ENCODE measurements at regions of chr11 and their contacts with region 1.

Region 1: GRCh38 chr11:64040684-64041322 is 5.1 kb downstream of the FLRT1 start:
- DNase-seq: peak; percentile 27
- ATAC-seq: peak; percentile 49
- H3K4me3 ChIP-seq: no peak overlapping the region
- H3K27ac ChIP-seq: no peak overlapping the region
- H3K4me1 ChIP-seq: peaks cover 26% of the 10 kb centered on the region
- H3K27me3 ChIP-seq: peaks cover 2 to 21% of the 10 kb centered on the region in 2 experiments; a peak in 3 of 5 replicates
- CTCF ChIP-seq: peak; percentile 79
- EP300 ChIP-seq: no peak
- POLR2A ChIP-seq: no peak
- RAD21 ChIP-seq: peak; percentile 87

Region 2: GRCh38 chr11:63888170-63889086 is 152.4 kb before region 1 on chr11:
- CTCF ChIA-PET with region 1: no interaction called
- POLR2A ChIA-PET with region 1: no interaction called
- in situ Hi-C with region 1: no loop called
- intact Hi-C with region 1: no loop called
- DNase-seq: peak; percentile 81
- ATAC-seq: peak; percentile 93
- H3K4me3 ChIP-seq: peak overlapping the region; percentile 46 to 79 (median 53)
- H3K27ac ChIP-seq: peak overlapping the region; percentile 92
- H3K4me1 ChIP-seq: peaks cover 41% of the 10 kb centered on the region
- H3K27me3 ChIP-seq: no peaks in the 10 kb centered on the region
- CTCF ChIP-seq: peak; percentile 26
- EP300 ChIP-seq: no peak
- POLR2A ChIP-seq: peak; percentile 71 to 87
- RAD21 ChIP-seq: peak; percentile 60; the same call in 1 of the 2 replicates

Region 3: DNA sequence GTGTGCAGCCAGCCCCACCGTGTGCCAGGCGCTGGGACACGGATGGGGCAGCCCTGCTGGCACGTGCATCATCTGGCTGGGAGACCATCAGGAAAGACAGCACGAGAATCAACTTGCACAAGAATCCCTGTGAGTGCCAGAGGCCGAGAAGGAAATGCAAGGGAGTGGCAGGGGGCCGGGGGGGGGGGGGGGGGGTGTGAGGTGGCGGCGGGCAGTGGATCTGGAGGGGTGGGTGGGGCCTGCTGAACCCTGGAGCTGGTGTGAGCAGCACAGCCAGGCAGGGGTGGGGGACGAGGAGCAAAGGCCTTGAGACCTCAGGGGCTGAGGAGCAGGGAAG is 19.1 kb before region 1 on chr11:
- CTCF ChIA-PET with region 1: no interaction called
- POLR2A ChIA-PET with region 1: no interaction called
- in situ Hi-C with region 1: no loop called
- intact Hi-C with region 1: no loop called
- DNase-seq: no peak
- ATAC-seq: no peak
- H3K4me3 ChIP-seq: no peak overlapping the region
- H3K27ac ChIP-seq: no peak overlapping the region
- H3K4me1 ChIP-seq: peaks cover 15% of the 10 kb centered on the region
- H3K27me3 ChIP-seq: no peaks in the 10 kb centered on the region
- CTCF ChIP-seq: no peak
- EP300 ChIP-seq: no peak
- POLR2A ChIP-seq: no peak
- RAD21 ChIP-seq: no peak

Region 4: DNA sequence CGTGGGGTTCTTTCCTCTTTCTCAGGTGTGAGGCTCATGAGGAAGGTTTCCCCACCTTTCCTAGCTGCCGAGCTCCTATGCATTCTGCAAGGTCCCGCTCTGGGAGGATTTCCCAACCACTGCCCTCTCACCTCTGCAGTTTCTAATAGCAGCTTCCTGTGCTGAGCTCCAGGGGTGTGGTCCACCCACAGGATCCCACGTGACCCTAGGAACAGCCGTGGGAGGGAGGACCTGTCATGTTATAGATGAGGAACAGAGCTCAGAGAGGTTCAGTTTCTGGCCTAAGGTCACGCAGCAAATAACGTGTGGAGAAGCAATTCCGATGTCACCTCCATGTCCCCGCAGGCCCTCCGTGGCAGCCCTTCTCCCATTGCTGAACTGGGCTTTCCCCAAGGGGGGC is 33.4 kb after region 1 on chr11:
- CTCF ChIA-PET with region 1: no interaction called
- POLR2A ChIA-PET with region 1: no interaction called
- in situ Hi-C with region 1: no loop called
- intact Hi-C with region 1: no loop called
- DNase-seq: no peak
- ATAC-seq: no peak
- H3K4me3 ChIP-seq: no peak overlapping the region
- H3K27ac ChIP-seq: no peak overlapping the region
- H3K4me1 ChIP-seq: no peaks in the 10 kb centered on the region
- H3K27me3 ChIP-seq: no peaks in the 10 kb centered on the region
- CTCF ChIP-seq: no peak
- EP300 ChIP-seq: no peak
- POLR2A ChIP-seq: no peak
- RAD21 ChIP-seq: no peak

Region 5: GRCh38 chr11:64152841-64153691 is 112.3 kb after region 1 on chr11:
- CTCF ChIA-PET with region 1: interaction called, 8 read pairs
- POLR2A ChIA-PET with region 1: no interaction called
- in situ Hi-C with region 1: loop called (anchors 5 kb)
- intact Hi-C with region 1: loop called (anchors 1 kb)
- DNase-seq: peak; percentile 15
- ATAC-seq: peak; percentile 84
- H3K4me3 ChIP-seq: no peak overlapping the region; a peak in 1 of 6 replicates
- H3K27ac ChIP-seq: no peak overlapping the region
- H3K4me1 ChIP-seq: peaks cover 34% of the 10 kb centered on the region
- H3K27me3 ChIP-seq: no peaks in the 10 kb centered on the region
- CTCF ChIP-seq: peak; percentile 94
- EP300 ChIP-seq: no peak
- POLR2A ChIP-seq: no peak
- RAD21 ChIP-seq: peak; percentile 75